ENCODE measurements at regions of chr11 and their contacts with region 1.

Region 1: GRCh38 chr11:2305140-2305840 is 3.5 kb downstream of the TSPAN32 start:
- DNase-seq: peak; percentile 90 to 96 (median 96)
- ATAC-seq: peak; percentile 43 to 72
- H3K4me3 ChIP-seq: no peak overlapping the region
- H3K27ac ChIP-seq: peak overlapping the region; percentile 5
- H3K4me1 ChIP-seq: peaks cover 11% of the 10 kb centered on the region
- H3K27me3 ChIP-seq: no peaks in the 10 kb centered on the region

Region 2: DNA sequence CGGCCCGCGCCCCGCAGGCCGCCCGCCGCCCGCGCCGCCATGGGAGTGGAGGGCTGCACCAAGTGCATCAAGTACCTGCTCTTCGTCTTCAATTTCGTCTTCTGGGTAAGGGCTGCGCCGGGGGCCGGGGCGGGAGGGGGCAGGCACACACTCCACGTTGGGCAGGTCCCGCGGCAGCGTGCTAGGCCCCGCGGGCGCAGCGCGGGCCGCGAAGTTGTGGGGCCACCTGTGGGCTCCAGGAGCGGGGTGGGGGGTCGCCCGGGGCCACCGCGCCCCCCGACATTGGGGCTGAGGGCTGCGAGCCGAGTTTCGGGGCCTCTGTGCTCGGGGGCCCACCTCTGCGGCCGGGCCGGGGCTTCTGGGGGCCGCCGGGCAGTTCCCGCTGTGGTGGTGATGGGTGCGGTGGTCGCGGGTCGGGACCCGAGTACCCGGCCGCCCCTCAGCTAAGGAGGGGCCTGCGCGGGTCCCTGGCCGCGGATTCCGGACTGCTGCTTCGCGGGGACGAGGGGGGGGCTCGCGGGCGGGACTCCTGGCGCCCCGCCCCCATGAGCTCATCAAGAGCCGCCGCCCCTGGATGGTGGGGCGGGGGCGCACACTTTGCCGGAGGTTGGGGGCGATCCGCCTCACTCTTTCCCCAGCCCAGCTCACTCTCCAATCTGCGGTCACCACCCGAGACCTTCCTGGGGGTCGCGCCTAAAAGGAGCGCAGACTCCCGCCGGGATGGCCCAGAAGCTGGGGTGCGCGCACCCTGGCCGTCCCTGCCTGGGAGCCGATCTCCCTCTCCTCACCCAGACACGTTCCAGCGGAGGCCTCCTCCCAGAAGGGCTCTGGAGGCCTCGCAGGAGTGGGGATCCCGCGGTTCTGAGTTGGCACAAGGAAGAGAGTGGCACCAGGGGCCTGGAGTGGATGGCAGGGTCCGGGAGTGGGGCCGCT is 72.5 kb after region 1 on chr11:
- intact Hi-C with region 1: loop called in 3 of 4 experiments (anchors 1 to 10 kb)
- DNase-seq: peak; percentile 77 to 93 (median 91)
- ATAC-seq: peak; percentile 25 to 51
- H3K4me3 ChIP-seq: peak overlapping the region; percentile 97
- H3K27ac ChIP-seq: peak overlapping the region; percentile 96
- H3K4me1 ChIP-seq: peaks cover 20% of the 10 kb centered on the region
- H3K27me3 ChIP-seq: no peaks in the 10 kb centered on the region

Region 3: GRCh38 chr11:2420502-2421225 is 115.4 kb after region 1 on chr11:
- intact Hi-C with region 1: loop called (anchors 2 kb)
- DNase-seq: peak; percentile 70 to 91 (median 90)
- ATAC-seq: peak; percentile 94
- H3K4me3 ChIP-seq: no peak overlapping the region
- H3K27ac ChIP-seq: no peak overlapping the region
- H3K4me1 ChIP-seq: no peaks in the 10 kb centered on the region
- H3K27me3 ChIP-seq: no peaks in the 10 kb centered on the region

Region 4: DNA sequence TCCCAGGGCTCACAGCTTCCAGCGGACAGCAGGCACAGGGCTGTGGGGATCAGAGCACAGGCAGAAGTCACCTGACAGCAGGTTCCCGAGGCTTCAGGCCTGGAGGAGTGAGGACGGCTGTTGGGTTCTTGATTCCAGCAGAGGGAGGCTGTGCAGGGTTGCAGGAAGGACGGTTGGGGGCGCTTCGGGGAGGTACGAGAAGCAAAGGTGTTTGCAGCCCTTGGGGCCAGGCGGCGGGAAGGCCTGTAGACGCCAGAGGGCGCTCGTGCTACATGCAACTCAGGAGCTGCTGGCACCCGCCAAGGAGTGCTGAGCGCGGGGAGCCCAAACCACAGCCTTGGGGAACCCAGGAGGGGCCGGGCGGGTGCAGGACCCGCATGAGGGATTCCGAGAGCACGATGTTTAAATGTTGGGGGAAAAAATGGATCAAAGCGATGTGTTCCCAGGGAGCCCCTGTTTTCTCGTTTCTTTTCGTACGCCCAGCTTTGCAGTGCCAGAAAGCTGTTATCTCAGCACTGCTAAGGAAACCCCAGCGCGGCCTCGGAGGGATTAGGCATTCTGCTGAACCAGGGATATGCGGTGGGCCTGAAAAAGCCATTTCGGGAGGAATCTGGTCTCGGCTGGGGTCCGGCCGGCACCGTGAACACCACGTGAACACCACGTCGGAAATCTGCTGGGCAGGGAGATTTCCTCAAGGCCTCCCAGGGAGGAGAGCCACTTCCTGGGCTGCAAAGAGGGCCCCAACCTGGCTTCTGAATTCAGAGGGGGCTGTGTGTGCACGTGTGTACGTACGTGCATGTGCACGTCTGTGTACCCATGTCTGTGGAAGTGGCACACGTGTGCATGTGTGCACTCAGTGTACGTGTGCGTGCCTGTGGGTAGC is 227.7 kb after region 1 on chr11:
- intact Hi-C with region 1: loop called in 1 of 4 experiments (anchors 10 kb)
- DNase-seq: peak; percentile 89 to 96 (median 95)
- ATAC-seq: peak; percentile 83 to 88
- H3K4me3 ChIP-seq: peak overlapping the region; percentile 3
- H3K27ac ChIP-seq: no peak overlapping the region
- H3K4me1 ChIP-seq: peaks cover 3% of the 10 kb centered on the region
- H3K27me3 ChIP-seq: no peaks in the 10 kb centered on the region

Region 5: DNA sequence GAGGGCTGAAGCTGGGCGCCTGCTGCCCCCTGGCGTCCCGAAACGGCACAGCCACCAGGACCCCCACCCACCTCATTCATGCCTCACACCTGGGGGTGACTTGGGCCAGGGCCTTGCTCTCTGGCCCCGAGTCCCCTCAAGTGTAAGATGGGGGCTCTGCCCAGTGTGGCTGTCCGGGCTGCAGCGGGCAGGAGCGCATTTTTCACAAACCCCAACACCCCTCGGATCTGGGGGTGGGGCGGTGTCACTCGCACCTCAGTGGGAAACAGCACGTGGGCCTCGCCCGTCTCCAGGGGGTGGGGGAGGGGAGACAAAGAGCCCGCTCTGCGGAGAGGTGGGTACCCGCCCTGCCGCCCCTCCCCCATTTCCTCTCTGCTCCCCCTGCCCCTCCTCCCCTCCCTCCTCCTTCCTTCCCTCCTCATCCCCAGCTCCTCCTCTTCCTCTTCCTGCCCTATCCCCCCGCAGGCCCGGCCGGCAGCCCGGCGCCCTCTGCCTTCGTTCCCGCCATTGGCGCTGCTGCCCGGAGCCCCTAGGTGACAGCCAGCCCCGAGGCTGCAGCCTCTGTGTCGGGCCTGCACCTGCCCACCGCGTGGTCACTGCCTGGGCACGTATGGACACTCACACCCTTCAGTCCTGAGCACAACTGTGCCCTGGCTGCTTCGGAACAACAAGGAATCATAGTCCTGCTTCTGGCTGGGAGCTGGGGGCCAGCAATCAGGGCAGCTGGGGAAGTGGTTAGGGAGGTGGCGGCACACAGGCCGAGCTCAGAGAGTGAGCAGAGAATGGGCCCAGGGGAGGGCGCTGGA is 587.1 kb after region 1 on chr11:
- intact Hi-C with region 1: loop called in 1 of 4 experiments (anchors 10 kb)
- DNase-seq: peak; percentile 70 to 89 (median 83)
- ATAC-seq: peak; percentile 56 to 61
- H3K4me3 ChIP-seq: peak overlapping the region; percentile 8
- H3K27ac ChIP-seq: peak overlapping the region; percentile 3
- H3K4me1 ChIP-seq: peaks cover 8% of the 10 kb centered on the region
- H3K27me3 ChIP-seq: no peaks in the 10 kb centered on the region

Measured in right cardiac atrium (tissue), 5 donors.